PC-9 (cell line): ENCODE measurements at regions of chr5 and their contacts with region 1.

Region 1: GRCh38 chr5:44862808-44863207 is 54.1 kb downstream of the MRPS30 start:
- DNase-seq: peak in 1 of 2 experiments; percentile 43
- H3K4me3 ChIP-seq: no peak overlapping the region
- H3K27ac ChIP-seq: no peak overlapping the region
- H3K4me1 ChIP-seq: no peaks in the 10 kb centered on the region
- H3K27me3 ChIP-seq: no peaks in the 10 kb centered on the region
- CTCF ChIP-seq: peak; percentile 82

Region 2: DNA sequence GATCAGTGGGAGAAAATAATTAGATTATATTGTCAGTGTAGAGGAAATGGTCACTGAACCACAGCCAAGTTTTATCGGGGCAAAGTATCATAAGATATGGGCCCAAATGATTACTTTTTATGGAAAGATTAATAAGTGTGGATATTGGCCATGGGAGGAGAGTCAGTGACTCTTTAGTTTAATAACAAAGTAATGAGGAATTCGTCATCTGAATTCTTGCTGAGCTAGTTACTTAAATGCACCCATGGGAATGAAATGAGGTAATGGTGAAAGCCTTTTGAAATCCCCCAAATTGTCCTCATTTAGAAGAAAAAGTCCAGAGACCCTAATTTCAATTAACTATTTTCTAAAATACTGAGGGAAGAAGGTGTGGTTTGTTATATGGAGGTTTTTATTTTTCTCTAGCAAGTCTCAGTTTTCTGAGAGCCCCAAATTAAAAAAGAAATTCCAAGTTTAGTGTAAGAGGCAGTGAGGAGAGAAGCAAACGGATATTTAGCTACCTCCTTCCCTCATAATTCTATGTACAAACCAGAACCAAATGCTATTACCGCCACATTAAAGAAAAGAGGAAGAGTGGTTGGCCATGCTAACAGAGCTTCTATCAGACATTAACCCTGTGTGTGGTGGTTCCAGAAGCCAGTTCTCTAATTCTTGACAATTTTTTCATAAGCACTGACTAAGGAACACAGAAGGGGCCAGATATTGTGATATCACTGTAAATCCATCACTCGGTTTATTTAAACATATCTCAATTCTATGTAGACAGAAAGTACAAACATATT is 91.7 kb before region 1 on chr5:
- CTCF ChIA-PET with region 1: no interaction called
- POLR2A ChIA-PET with region 1: no interaction called
- intact Hi-C with region 1: no loop called
- DNase-seq: no peak
- H3K4me3 ChIP-seq: no peak overlapping the region
- H3K27ac ChIP-seq: no peak overlapping the region
- H3K4me1 ChIP-seq: no peaks in the 10 kb centered on the region
- H3K27me3 ChIP-seq: no peaks in the 10 kb centered on the region
- CTCF ChIP-seq: no peak

Region 3: DNA sequence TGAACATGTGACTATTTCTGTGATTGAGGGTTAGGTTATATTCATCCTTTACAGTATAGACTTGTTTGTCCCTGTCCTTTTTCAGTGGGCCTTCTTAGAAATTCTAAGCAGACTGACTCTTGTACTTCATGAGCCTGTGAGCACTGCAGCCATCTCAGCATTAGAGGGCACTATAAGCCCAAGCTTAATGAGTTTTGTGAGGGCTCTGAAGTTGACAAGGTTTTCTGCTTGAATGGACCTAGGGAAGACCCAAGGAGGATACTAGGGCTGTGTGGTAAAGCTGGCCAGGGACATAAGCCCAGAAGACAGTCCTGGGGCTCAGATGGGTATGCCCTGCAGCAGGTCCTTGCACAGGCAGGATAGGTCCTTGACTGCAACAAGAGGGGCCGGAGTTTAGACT is 72.5 kb after region 1 on chr5:
- CTCF ChIA-PET with region 1: no interaction called
- POLR2A ChIA-PET with region 1: interaction called, 5 read pairs
- intact Hi-C with region 1: loop called (anchors 5 kb)
- DNase-seq: no peak
- H3K4me3 ChIP-seq: no peak overlapping the region
- H3K27ac ChIP-seq: no peak overlapping the region
- H3K4me1 ChIP-seq: peaks cover 8% of the 10 kb centered on the region; the same call in 1 of the 2 replicates
- H3K27me3 ChIP-seq: no peaks in the 10 kb centered on the region
- CTCF ChIP-seq: peak; percentile 51; the same call in 1 of the 2 replicates

Region 4: DNA sequence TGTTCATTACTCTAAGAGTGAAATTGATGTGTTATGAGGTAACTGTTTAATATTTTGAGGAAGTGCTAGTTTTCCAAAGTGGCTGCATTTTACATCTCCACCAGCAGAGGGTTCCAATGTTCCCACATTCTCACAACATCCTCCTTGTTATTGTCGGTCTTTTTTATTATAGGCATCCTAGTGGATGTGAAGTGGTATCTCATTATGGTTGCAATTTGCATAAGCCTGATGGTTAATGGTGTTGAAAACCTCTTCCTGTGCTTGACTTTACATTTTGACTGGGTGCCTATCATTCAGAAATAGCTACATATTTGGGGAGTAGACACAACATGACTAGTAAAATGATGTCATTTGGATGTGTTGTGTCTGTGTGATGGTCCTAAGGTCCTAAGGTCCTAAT is 89.6 kb after region 1 on chr5:
- CTCF ChIA-PET with region 1: interaction called, 3 read pairs
- POLR2A ChIA-PET with region 1: no interaction called
- intact Hi-C with region 1: loop called (anchors 1 kb)
- DNase-seq: peak; percentile 35 to 43
- H3K4me3 ChIP-seq: no peak overlapping the region
- H3K27ac ChIP-seq: no peak overlapping the region
- H3K4me1 ChIP-seq: no peaks in the 10 kb centered on the region
- H3K27me3 ChIP-seq: no peaks in the 10 kb centered on the region
- CTCF ChIP-seq: peak; percentile 92

Region 5: DNA sequence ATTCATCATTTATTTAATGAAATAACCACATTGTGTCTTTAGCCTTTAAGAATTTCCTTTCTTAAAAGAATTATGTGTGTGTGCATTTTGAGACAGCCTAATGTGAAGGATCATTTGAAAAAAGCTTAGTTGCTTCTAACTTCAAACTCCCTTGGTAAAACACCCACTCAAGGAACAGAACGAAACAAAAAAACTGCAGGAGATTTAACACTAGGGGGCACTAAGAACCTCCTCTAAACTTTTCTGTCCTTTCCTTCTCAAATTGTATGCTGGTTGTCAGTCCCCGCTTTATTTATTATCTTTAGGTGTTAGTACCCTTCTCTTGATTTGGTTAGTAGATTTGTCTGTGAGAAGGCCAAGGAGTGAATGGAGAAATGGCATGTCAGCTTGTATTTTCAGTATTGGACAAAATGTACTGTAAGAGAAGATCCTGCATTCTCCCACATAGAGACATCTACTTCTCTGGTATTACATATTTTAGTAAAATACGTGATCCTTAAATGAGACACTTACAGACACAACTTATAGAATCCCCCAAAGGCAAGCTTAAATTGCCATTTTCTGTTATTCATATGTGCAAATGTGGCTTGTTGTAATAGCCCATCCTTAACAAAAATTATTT is 175.7 kb after region 1 on chr5:
- CTCF ChIA-PET with region 1: interaction called, 5 read pairs
- POLR2A ChIA-PET with region 1: no interaction called
- intact Hi-C with region 1: loop called (anchors 5 kb)
- DNase-seq: peak in 1 of 2 experiments; percentile 12
- H3K4me3 ChIP-seq: no peak overlapping the region
- H3K27ac ChIP-seq: no peak overlapping the region
- H3K4me1 ChIP-seq: no peaks in the 10 kb centered on the region
- H3K27me3 ChIP-seq: no peaks in the 10 kb centered on the region
- CTCF ChIP-seq: peak; percentile 86

Region 6: DNA sequence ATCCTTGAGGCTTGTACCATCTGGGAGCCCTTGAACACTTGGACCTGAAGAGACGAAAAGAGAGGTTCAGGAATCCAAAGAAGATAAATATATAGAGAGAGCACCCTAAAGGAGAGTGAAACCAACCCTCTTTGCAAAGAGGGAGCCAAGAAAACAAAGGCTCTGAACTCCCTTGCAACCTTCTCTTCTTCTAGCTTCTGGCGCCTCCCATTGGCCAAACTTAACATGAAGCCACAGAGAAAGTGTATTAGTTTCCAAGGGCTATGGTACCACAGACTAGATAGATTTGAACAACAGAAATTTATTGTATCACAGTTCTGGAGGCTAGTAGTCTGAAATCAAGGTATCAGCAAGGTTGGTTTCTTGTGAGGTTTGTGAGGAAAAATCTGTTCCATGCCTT is 658.3 kb after region 1 on chr5:
- CTCF ChIA-PET with region 1: no interaction called
- POLR2A ChIA-PET with region 1: no interaction called
- intact Hi-C with region 1: loop called (anchors 2 kb)
- DNase-seq: peak in 1 of 2 experiments; percentile 9
- H3K4me3 ChIP-seq: no peak overlapping the region
- H3K27ac ChIP-seq: no peak overlapping the region
- H3K4me1 ChIP-seq: no peaks in the 10 kb centered on the region
- H3K27me3 ChIP-seq: no peaks in the 10 kb centered on the region
- CTCF ChIP-seq: peak; percentile 39; the same call in 1 of the 2 replicates

Region 7: GRCh38 chr5:45639038-45639437 is 776.2 kb after region 1 on chr5:
- CTCF ChIA-PET with region 1: no interaction called
- POLR2A ChIA-PET with region 1: no interaction called
- intact Hi-C with region 1: loop called (anchors 2 kb)
- DNase-seq: no peak
- H3K4me3 ChIP-seq: no peak overlapping the region
- H3K27ac ChIP-seq: no peak overlapping the region
- H3K4me1 ChIP-seq: no peaks in the 10 kb centered on the region
- H3K27me3 ChIP-seq: no peaks in the 10 kb centered on the region
- CTCF ChIP-seq: peak; percentile 58

Region 8: GRCh38 chr5:45774528-45774927 is 911.7 kb after region 1 on chr5:
- CTCF ChIA-PET with region 1: interaction called, 3 read pairs
- POLR2A ChIA-PET with region 1: no interaction called
- intact Hi-C with region 1: loop called (anchors 2 kb)
- DNase-seq: no peak
- H3K4me3 ChIP-seq: no peak overlapping the region
- H3K27ac ChIP-seq: no peak overlapping the region
- H3K4me1 ChIP-seq: no peaks in the 10 kb centered on the region
- H3K27me3 ChIP-seq: no peaks in the 10 kb centered on the region
- CTCF ChIP-seq: peak; percentile 75